ENCODE measurements at regions of chr13 and their contacts with region 1.

Region 1: GRCh38 chr13:52173373-52173772 is 14.0 kb upstream of the NEK3 start:
- DNase-seq: no peak
- H3K4me3 Mint-ChIP-seq: no peak overlapping the region
- H3K27ac Mint-ChIP-seq: no peak overlapping the region
- H3K4me1 Mint-ChIP-seq: peaks cover 8% of the 10 kb centered on the region
- H3K27me3 Mint-ChIP-seq: no peaks in the 10 kb centered on the region

Region 2: DNA sequence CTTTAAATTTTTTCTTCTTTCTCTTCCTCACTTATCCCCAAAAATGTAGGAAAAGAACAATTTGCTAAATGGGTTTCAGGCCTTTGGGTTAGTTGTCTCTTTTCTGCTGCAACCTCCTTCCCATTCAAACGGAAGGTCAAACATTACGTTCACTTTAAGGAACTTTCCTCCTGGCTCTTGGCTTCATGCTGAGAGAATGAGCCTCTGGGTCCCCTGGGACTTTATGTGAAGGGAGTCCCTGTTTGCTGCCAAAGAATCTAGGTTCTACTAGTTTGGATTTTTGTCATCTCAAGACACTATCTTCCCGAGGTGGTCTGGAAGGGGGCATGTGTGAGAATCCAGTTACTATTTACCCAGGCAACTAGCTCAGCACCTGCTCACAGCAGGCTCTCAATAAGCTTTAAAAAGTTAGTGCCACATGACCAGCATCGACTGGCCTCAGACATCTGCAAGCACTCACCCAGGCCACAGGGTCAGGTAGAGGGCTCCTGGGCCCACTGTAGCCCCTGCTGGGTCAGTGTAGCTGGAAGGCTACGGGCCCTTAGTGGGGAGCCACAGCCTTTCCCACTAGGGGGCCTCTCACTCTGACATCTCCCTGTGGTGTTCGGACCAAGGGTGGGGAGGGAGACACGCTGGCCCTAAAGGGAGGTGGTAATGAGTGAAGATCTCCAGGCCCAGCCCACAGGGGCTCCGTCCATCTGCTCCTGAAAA is 910.7 kb before region 1 on chr13:
- CTCF ChIA-PET with region 1: no interaction called
- POLR2A ChIA-PET with region 1: no interaction called
- DNase-seq: no peak
- H3K4me3 Mint-ChIP-seq: no peak overlapping the region
- H3K27ac Mint-ChIP-seq: no peak overlapping the region
- H3K4me1 Mint-ChIP-seq: no peaks in the 10 kb centered on the region
- H3K27me3 Mint-ChIP-seq: no peaks in the 10 kb centered on the region

Region 3: DNA sequence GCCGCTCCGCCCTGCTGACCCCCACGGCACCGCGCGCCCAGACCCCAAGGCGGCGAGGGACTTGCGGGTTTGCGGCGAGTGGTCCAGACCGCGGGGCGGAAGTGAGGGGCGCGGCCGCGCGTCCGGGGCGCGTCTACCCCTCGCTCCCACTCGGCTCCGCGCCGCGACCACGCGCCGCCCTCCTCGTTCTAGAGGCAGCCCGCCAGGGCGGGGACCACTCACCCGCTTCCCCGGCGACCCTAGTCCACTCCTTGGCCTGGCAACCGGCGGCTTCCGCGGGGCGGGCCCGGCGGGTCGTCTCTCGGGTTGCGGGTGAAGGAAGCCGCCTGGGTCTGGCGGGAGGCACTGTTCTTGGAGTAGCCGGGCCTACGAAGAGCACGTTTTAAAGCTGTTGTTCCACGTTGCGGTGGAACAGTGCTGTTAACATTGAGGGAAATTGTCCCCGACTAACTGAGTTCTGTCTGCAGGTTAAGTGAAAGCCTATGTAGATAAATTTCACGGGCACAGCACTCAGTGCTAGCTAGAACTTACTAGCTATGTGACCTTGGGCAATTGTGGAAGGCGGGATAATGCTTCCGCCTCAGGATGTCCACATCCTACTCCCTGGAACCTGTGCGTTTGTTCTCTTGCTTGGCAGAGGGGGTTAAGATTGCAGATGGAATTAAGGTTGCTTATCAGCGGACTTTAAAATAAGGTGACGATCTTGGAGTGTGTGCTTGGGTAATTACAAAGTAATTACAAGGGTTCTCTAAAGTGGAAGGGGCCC is 13.9 kb before region 1 on chr13 and contains the start of gene NEK3:
- CTCF ChIA-PET with region 1: interaction called, 14 read pairs
- POLR2A ChIA-PET with region 1: no interaction called
- DNase-seq: peak; percentile 66
- H3K4me3 Mint-ChIP-seq: peak within 1 kb of the TSS; percentile 82
- H3K27ac Mint-ChIP-seq: peak within 1 kb of the TSS; percentile 91
- H3K4me1 Mint-ChIP-seq: peaks cover 52% of the 10 kb centered on the region
- H3K27me3 Mint-ChIP-seq: no peaks in the 10 kb centered on the region
- total RNA-seq, gene NEK3: 3.7 to 5.1 TPM

Measured in activated CD4-positive, alpha-beta T cell treated with anti-CD3 and anti-CD28 coated beads, Interleukin-2, amount 10 ng/mL, durations not matched to agents 7 days and 5 days (primary cell).